Naive thymus-derived CD4-positive, alpha-beta T cell (primary cell): ENCODE measurements at regions of chr12 and their contacts with region 1.

Region 1: DNA sequence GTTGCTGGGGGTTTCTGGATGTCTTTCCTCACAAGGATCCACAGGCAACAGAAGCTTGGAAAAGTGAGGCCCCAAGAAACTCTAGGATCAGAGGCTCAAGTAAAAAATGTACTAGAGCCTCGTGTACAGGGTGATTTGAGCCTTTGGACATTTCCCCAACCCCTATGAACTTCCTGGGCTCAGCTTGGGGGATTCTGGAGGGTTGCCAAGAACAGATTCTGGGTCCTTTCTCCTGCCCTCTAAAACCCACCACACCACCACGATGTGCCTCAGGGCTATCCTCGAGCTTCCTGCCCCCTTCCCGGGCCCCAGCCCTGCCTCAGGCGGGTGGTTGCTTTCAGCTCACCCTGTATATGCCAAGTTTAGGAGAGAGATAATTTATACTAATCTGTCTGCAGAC is 583 bp downstream of the FAM186B start:
- DNase-seq: no peak
- ATAC-seq: no peak
- H3K4me3 ChIP-seq: no peak overlapping the region
- H3K4me3 Mint-ChIP-seq: no peak overlapping the region
- H3K27ac ChIP-seq: no peak overlapping the region
- H3K27ac Mint-ChIP-seq: no peak overlapping the region
- H3K4me1 ChIP-seq: no peaks in the 10 kb centered on the region
- H3K4me1 Mint-ChIP-seq: peaks cover 0 to 6% (median 2%) of the 10 kb centered on the region in 7 donors
- H3K27me3 ChIP-seq: no peaks in the 10 kb centered on the region
- H3K27me3 Mint-ChIP-seq: peaks cover 0 to 7% (median 2%) of the 10 kb centered on the region in 5 donors

Region 2: DNA sequence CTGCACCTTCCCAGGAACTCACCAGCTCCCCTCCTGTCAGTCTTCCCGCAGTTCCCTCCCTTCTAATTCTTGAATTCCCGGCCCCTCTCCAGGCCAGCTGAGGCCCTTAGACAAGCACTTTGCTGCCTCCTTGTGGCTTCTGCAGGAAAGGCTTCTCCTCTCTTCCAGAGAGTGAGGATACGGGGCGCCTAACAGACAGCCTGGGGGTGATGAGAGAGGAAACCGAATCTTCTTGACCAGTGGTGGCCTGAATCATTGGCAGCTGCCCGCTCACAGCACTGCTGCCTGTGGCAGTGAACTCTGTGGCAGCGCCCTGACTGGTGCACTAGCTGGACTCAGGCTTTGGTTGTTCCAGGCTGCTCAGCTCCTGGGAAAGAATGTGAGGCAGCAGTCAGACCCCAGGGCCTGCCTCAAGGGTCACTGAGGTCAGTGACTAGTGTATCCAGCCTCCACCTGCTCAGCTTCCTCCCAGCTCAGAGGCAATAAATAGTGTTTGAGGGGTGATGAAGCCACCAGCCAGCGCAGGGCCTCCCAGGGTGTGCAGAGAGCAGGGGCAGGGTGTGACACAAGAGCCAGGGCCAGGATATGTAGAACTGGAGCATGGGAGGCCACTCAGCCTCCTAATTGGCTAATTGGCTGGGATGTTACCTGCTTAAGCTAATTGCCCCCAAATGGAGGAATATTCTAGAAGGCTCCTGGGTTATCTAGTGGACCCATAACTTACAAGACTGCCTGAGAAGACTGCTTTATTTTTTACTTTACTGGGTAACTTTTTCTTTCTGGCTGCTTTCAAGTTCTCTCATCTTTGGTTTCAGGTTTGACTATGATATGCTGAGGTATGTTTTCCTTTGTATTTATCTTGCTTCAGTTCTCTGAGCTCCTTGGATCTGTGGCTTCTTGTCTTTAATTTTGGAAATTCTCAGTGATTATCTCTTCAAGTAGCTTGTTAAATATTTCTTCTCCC is 24.0 kb before region 1 on chr12:
- CTCF ChIA-PET with region 1: no interaction called
- POLR2A ChIA-PET with region 1: no interaction called
- intact Hi-C with region 1: loop called in 1 of 2 experiments (anchors 1 kb)
- DNase-seq: peak; percentile 26 to 55 (median 43)
- ATAC-seq: peak; percentile 80
- H3K4me3 ChIP-seq: no peak overlapping the region
- H3K4me3 Mint-ChIP-seq: no peak overlapping the region
- H3K27ac ChIP-seq: no peak overlapping the region
- H3K27ac Mint-ChIP-seq: peak overlapping the region in 1 of 9 donors; percentile 5
- H3K4me1 ChIP-seq: peaks cover 3 to 5% of the 10 kb centered on the region in 2 donors
- H3K4me1 Mint-ChIP-seq: peaks cover 12 to 18% (median 16%) of the 10 kb centered on the region in 7 donors
- H3K27me3 ChIP-seq: no peaks in the 10 kb centered on the region
- H3K27me3 Mint-ChIP-seq: no peaks in the 10 kb centered on the region